Activated CD4-positive, alpha-beta T cell treated with anti-CD3 and anti-CD28 coated beads for 36 hours (primary cell): ENCODE measurements at regions of chr1 and their contacts with region 1.

Region 1: DNA sequence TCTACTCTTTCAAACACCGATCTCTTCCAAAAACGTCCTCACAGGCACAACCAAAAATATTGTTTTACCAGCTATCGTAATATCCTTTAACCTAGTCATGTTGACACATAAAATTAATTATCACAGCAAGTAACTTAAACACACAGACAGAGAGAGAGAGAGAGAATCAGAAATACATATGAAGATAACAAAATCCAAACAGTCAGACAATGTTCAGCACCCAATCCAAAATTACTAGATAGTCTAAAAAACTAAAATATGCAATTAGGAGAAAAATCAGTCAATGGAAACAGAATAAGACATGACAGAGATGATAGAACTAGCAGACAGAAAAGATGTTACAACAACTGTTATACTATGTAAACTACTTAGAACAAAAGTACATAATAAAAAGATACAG is 537.7 kb downstream of the LMO4 start:
- DNase-seq: no peak
- ATAC-seq: no peak
- H3K4me3 Mint-ChIP-seq: no peak overlapping the region
- H3K27ac Mint-ChIP-seq: no peak overlapping the region
- H3K4me1 Mint-ChIP-seq: peaks cover 4% of the 10 kb centered on the region
- H3K27me3 Mint-ChIP-seq: peaks cover 2% of the 10 kb centered on the region

Region 2: GRCh38 chr1:87348341-87348999 is 517.9 kb before region 1 on chr1:
- CTCF ChIA-PET with region 1: no interaction called
- POLR2A ChIA-PET with region 1: interaction called, 13 read pairs
- intact Hi-C with region 1: no loop called
- DNase-seq: no peak
- ATAC-seq: no peak
- H3K4me3 Mint-ChIP-seq: no peak overlapping the region
- H3K27ac Mint-ChIP-seq: no peak overlapping the region
- H3K4me1 Mint-ChIP-seq: no peaks in the 10 kb centered on the region
- H3K27me3 Mint-ChIP-seq: no peaks in the 10 kb centered on the region

Region 3: GRCh38 chr1:87464022-87464490 is 402.4 kb before region 1 on chr1:
- CTCF ChIA-PET with region 1: no interaction called
- POLR2A ChIA-PET with region 1: no interaction called
- intact Hi-C with region 1: no loop called
- DNase-seq: no peak
- ATAC-seq: peak; percentile 36
- H3K4me3 Mint-ChIP-seq: no peak overlapping the region
- H3K27ac Mint-ChIP-seq: no peak overlapping the region
- H3K4me1 Mint-ChIP-seq: peaks cover 6% of the 10 kb centered on the region
- H3K27me3 Mint-ChIP-seq: peaks cover 5% of the 10 kb centered on the region

Region 4: DNA sequence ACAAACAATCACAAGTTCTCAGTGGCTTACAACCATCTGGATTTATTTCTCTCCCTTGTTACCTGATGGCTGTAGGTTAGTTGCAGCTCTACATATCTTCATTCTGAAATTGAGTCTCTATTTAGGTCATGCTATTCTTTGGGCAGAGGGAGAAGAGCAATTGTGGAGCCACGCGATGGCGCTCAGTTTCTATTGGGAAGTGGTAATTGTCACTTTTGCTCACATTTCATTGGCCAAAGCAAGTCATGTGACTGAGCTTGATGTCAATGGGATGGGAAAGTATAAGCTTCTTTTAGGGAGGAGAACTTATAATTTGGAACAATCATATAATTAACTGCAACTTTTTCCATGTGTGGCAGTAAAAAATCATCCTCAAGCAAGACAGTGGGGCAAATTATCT is 371.3 kb before region 1 on chr1:
- CTCF ChIA-PET with region 1: no interaction called
- POLR2A ChIA-PET with region 1: no interaction called
- intact Hi-C with region 1: no loop called
- DNase-seq: no peak
- ATAC-seq: no peak
- H3K4me3 Mint-ChIP-seq: no peak overlapping the region
- H3K27ac Mint-ChIP-seq: no peak overlapping the region
- H3K4me1 Mint-ChIP-seq: no peaks in the 10 kb centered on the region
- H3K27me3 Mint-ChIP-seq: no peaks in the 10 kb centered on the region

Region 5: GRCh38 chr1:87840767-87841166 is 25.6 kb before region 1 on chr1:
- CTCF ChIA-PET with region 1: no interaction called
- POLR2A ChIA-PET with region 1: no interaction called
- intact Hi-C with region 1: no loop called
- DNase-seq: no peak
- ATAC-seq: no peak
- H3K4me3 Mint-ChIP-seq: no peak overlapping the region
- H3K27ac Mint-ChIP-seq: no peak overlapping the region
- H3K4me1 Mint-ChIP-seq: no peaks in the 10 kb centered on the region
- H3K27me3 Mint-ChIP-seq: peaks cover 3% of the 10 kb centered on the region

Region 6: GRCh38 chr1:88118176-88118845 is 251.9 kb after region 1 on chr1:
- CTCF ChIA-PET with region 1: no interaction called
- POLR2A ChIA-PET with region 1: no interaction called
- intact Hi-C with region 1: no loop called
- DNase-seq: no peak
- ATAC-seq: no peak
- H3K4me3 Mint-ChIP-seq: no peak overlapping the region
- H3K27ac Mint-ChIP-seq: no peak overlapping the region
- H3K4me1 Mint-ChIP-seq: no peaks in the 10 kb centered on the region
- H3K27me3 Mint-ChIP-seq: peaks cover 6% of the 10 kb centered on the region